Right ventricle myocardium superior (tissue), 1 donor: ENCODE measurements at regions of chr10 and their contacts with region 1.

Region 1: GRCh38 chr10:75401569-75402485 is at the start of gene ZNF503:
- DNase-seq: peak; percentile 98
- ATAC-seq: peak; percentile 80
- total RNA-seq, gene ZNF503: 6.8 TPM

Region 2: DNA sequence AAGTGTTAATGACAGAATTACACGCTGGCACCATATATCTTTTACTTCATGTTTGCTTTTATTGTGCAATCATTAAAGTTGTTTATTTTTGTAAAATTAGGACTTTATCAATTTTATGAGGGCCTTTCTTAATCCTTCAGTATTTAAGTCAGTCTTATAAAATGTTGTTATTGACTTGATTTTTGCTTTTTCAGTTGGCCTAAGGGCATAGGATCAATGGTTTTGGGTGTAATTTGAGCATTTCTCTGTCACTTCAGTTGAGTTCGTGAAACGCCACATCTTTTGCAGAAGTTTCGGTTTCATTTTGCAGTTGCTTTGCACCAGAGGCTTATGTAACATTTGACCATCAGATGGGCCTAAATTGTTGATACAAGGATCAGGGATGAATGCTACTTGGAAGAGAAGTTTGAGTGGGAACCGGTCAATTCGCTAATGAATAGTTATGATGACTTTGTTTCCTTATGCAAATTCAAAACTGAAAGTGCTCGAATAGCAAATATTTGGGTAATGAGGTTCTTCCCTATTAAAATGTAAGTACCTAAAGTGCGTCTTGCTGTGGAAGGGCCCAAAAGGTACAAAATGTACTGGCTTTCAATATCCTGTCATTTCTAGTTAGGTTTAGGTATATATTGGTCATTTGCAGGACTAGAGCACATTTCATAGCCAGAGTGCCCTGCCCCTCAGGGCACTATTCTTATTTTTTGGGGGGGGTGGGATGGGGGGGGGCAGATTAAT is 370.5 kb after region 1 on chr10:
- intact Hi-C with region 1: loop called (anchors 10 kb)
- DNase-seq: no peak
- ATAC-seq: no peak

Region 3: DNA sequence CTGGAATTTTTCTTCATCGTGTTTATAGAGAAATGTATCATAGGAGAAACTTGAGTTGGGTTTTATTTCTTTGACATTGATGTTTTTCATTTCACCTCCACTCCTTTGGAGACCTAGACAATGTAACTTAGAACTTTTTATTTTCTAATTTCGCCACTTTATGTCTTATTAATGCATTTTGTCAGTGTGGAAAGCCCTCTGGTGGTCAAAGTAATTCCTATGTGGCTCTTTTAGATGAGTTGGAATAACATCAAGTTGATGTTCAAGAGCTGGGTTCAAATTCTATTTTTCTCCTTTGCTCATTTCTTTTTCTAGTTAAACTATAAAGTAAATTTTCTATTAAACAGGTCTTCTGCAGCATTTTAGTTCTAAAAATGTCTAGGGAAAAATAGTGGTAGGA is 508.2 kb after region 1 on chr10:
- intact Hi-C with region 1: loop called (anchors 10 kb)
- DNase-seq: no peak
- ATAC-seq: no peak

Region 4: GRCh38 chr10:76036111-76036940 is 634.5 kb after region 1 on chr10:
- intact Hi-C with region 1: loop called (anchors 5 kb)
- DNase-seq: peak; percentile 80
- ATAC-seq: peak; percentile 95

Region 5: DNA sequence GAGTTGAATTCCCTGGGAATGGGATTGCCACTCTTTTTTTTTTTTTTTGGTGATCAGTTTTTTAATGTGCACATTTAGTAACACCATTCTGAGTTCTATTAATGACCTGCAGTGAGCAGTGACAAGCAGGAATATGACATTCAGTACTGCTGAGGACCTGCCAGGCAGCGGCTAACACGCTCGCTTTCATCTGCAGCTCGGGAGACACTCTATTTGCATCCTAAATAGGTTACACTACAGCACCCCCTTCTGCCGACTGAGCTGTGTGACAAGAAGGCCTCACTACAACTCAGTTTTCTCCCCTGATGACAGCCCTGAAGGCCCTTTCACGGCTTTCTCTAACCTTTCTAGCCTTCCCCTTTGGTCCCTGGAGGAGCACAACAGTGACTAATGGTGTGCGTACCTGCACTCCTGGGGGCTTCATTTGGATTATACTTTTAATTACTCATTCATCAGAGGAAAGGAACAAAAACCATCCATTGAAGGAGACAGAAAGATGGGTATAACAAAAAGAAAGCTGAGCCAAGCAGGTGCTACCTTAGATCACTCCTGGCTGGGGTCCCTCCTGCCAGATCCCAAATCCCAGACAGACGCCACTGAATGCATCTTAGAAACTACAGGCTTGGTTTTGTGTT is 902.0 kb after region 1 on chr10:
- intact Hi-C with region 1: loop called (anchors 10 kb)
- DNase-seq: peak; percentile 73
- ATAC-seq: peak; percentile 98

Region 6: DNA sequence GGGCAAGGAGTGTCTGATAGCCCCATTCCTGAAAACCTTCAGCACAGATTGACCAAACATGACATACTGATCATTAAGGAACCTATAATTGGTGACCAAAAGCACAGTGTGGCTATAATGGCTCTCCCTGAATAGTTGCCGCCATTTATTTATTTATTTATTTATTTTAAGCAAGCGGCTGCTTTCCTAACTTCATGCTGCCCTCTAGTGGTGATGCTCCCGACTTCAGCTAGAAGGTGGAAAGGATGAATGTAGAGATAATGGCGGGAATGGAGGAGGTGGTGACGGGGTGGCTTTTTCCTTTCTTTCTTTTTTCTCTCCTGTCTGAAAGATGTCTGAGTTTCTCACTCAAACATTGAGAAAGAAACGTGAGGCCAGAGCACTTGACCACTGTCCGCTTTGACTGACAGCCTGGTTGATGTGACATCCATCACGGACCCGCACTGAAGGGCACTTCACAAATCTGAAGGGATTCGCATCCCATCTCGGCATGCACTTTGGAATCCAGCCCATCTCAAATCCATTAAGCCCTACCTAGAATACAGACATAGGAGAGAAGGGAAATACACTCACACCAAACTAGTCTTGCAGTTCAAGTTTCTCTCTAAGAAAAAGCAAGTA is 1145.6 kb after region 1 on chr10:
- intact Hi-C with region 1: loop called (anchors 10 kb)
- DNase-seq: peak; percentile 79
- ATAC-seq: peak; percentile 86

Region 7: DNA sequence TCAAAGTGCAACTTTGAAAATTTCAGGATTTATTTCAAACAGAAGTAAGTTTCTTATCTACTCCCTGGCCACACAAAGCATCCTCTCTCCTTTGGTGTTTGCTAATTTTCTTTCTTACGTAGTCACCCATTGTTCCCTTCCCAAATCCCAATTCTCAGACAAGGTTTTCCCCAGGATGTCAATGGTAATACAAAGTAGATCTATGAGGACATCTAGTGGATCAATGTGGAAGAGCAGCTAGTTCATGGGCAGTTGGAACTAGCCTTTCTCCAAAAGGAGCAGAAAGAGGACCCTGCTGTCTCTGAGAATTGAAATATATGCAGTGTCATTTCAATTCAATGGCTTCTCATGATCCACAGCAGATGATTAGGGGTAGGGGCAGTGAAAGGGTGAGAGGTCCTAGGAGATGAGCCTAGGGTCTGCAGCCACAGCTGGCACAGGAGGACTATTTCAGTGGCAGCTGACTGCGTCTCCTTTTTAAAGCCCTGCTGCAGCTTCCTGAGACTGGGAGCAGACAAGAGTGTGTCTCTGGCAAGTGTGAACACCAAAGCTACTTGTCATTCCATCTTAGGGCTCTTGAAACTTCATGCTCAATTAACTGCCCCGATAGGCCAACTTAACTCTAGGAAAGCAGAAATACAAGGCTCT is 1603.2 kb after region 1 on chr10:
- intact Hi-C with region 1: loop called (anchors 10 kb)
- DNase-seq: no peak
- ATAC-seq: peak; percentile 89